ENCODE measurements at regions of chr10 and their contacts with region 1.

Region 1: DNA sequence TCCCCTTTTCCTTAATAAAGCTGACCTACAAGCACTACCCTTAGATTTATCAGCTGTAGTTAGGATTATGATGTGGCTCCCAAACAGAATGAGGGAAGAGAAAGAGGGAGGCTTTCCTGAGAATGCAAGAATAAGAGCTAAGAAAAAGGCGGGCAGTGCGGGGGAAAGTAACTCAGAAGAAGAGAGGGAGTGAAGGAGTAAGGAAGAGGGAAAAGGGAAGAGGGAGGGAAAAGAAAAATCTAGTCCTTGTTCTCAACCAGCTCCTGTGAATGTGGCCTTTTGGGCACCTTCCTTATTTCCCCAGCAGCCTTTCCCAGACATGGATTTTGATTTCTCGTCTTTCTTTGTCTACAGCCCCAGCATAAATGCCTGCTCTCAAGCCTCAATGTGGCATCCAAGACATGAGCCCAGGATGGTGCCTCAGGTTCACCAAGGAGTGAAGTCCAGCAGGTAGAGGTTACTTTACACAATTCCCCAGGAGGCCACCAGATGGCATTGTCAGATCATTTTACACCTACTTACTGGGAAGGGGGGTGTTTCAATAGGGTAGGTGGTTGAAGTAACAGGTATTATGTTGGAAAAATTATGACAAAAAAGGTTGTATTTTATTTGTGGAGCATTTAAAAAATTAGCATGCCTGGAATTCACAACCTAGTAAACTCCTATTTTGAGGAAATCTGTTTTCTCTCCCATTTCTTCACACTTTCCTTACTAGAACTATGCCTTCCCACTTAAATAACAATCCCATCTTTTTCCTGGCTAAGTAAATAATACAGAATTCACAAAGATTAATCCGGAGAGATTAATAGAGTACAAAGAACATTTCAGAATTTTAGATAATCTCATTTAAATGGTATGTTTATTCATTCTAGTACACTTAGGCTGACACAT is 106.5 kb downstream of the HTR7 start:
- DNase-seq: peak in 1 of 2 donors; percentile 59
- H3K4me3 ChIP-seq: no peak overlapping the region
- H3K27ac ChIP-seq: no peak overlapping the region
- H3K4me1 ChIP-seq: no peaks in the 10 kb centered on the region
- H3K27me3 ChIP-seq: no peaks in the 10 kb centered on the region
- CTCF ChIP-seq: peak in 5 of 7 experiments; percentile 49 to 61 (median 57)
- EP300 ChIP-seq: no peak
- POLR2A ChIP-seq: no peak

Region 2: DNA sequence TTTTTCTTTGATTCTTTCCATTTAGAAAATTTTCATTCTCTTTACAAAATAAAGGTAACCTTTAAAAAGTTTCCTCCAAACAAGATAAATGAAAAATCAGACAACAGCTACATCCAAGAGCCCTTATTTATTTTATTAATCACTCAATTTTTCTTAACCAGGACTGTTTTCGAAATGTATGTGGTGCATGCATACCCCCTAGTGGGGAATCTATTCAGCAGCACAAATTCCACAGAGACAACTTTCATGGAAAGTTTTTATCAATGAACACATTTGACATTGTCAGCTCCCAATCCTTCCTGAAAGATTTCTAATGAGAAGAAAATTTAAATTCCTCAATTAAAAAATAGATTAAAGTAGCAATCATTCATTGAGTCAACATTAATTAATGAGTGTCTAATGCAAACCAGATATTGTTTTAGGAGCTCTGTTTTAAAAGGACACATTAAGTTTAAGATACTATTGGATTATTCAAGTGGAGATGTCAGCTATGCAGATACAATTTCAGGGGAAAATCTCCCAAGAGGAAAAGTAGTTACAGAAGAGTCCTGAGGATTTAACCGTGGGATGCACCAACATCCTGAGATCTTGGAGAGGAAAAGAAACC is 111.7 kb after region 1 on chr10:
- intact Hi-C with region 1: loop called (anchors 10 kb)
- DNase-seq: peak in 1 of 2 donors; percentile 62
- H3K4me3 ChIP-seq: no peak overlapping the region
- H3K27ac ChIP-seq: no peak overlapping the region
- H3K4me1 ChIP-seq: peaks cover 0 to 11% (median 8%) of the 10 kb centered on the region in 4 donors
- H3K27me3 ChIP-seq: peaks cover 0 to 22% (median 6%) of the 10 kb centered on the region in 3 donors
- CTCF ChIP-seq: peak in 4 of 7 experiments; percentile 45 to 61 (median 51)
- EP300 ChIP-seq: no peak
- POLR2A ChIP-seq: no peak

Measured in stomach (tissue), 19 donors.